Gastrocnemius medialis (tissue), 4 donors: ENCODE measurements at regions of chr4 and their contacts with region 1.

Region 1: DNA sequence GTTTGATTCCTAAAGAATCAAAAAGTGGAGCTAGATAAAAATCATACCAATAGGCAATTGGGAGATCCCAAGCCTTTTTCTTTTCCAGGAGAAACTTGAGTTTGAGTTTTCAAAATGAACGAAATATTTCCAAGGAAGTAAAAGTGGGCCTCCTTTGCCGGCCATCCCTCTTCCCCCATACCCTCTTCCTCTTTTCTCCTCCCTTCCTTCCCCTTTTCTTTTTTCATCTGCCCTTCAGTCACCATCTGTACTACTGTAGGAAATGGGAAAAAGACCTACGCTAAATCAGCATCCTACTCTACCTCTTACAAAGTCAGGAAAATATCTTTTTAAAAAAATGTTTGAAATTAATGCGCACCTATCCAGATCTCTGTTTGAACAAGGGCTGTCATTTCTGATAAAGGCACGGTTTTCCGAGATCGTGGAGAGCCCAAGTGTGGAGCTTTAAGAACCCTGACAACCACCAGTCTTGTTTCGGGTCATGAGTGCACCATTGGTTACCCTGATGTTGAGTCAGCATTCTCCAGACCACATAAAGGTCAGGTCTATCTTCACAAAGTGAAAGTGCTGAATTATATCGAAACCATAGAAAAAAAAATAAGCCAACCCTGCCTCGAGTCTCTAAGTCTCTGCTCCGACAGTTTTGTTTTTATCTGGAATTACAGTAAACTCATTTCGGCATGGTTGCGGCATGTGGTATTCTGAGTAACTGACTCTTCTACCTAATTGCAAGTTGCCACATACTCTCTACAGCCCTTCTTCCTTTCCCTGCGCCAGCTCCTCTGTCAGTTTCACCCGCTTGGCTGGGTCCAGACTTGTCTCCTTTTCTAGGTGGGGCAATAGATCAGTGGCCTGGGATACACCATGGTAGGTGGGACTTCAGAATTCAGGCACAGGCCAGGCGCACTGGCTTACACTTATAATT is 140.2 kb upstream of the KLF3 start:
- DNase-seq: no peak
- ATAC-seq: no peak
- H3K4me3 ChIP-seq: no peak overlapping the region
- H3K27ac ChIP-seq: no peak overlapping the region
- H3K4me1 ChIP-seq: no peaks in the 10 kb centered on the region
- H3K27me3 ChIP-seq: no peaks in the 10 kb centered on the region
- CTCF ChIP-seq: no peak
- POLR2A ChIP-seq: no peak

Region 2: GRCh38 chr4:38411092-38411491 is 112.7 kb before region 1 on chr4:
- in situ Hi-C with region 1: loop called in 1 of 4 experiments (anchors 25 kb)
- intact Hi-C with region 1: no loop called
- DNase-seq: no peak
- ATAC-seq: no peak
- H3K4me3 ChIP-seq: no peak overlapping the region
- H3K27ac ChIP-seq: no peak overlapping the region
- H3K4me1 ChIP-seq: no peaks in the 10 kb centered on the region
- H3K27me3 ChIP-seq: no peaks in the 10 kb centered on the region
- CTCF ChIP-seq: no peak
- POLR2A ChIP-seq: no peak

Region 3: GRCh38 chr4:38759113-38759789 is 235.5 kb after region 1 on chr4:
- in situ Hi-C with region 1: no loop called
- intact Hi-C with region 1: no loop called
- DNase-seq: peak; percentile 23 to 24
- ATAC-seq: peak; percentile 50 to 62
- H3K4me3 ChIP-seq: no peak overlapping the region
- H3K27ac ChIP-seq: no peak overlapping the region
- H3K4me1 ChIP-seq: no peaks in the 10 kb centered on the region
- H3K27me3 ChIP-seq: no peaks in the 10 kb centered on the region
- CTCF ChIP-seq: peak; percentile 28 to 66 (median 48)
- POLR2A ChIP-seq: no peak